ENCODE measurements at regions of chr7 and their contacts with region 1.

Region 1: GRCh38 chr7:15015545-15016326 is 113.2 kb upstream of the DGKB start:
- DNase-seq: peak in 4 of 5 donors; percentile 24 to 38 (median 32)
- ATAC-seq: peak; percentile 87 to 93 (median 89)
- H3K4me3 ChIP-seq: peak overlapping the region in 8 of 12 donors; percentile 7 to 49 (median 40)
- H3K27ac ChIP-seq: peak overlapping the region in 10 of 12 donors; percentile 13 to 75 (median 54)
- H3K4me1 ChIP-seq: peaks cover 0 to 18% (median 0%) of the 10 kb centered on the region in 12 donors
- H3K27me3 ChIP-seq: no peaks in the 10 kb centered on the region
- CTCF ChIP-seq: peak; percentile 55 to 81 (median 72)
- POLR2A ChIP-seq: no peak

Region 2: GRCh38 chr7:14734839-14735321 is 280.9 kb before region 1 on chr7:
- intact Hi-C with region 1: loop called in 1 of 10 experiments (anchors 5 kb)
- DNase-seq: no peak
- ATAC-seq: peak in 3 of 4 donors; percentile 13 to 39 (median 38)
- H3K4me3 ChIP-seq: no peak overlapping the region
- H3K27ac ChIP-seq: no peak overlapping the region
- H3K4me1 ChIP-seq: no peaks in the 10 kb centered on the region
- H3K27me3 ChIP-seq: no peaks in the 10 kb centered on the region
- CTCF ChIP-seq: peak in 11 of 12 donors; percentile 9 to 44 (median 25)
- POLR2A ChIP-seq: no peak

Region 3: GRCh38 chr7:14836571-14837189 is 179.1 kb before region 1 on chr7:
- intact Hi-C with region 1: loop called in 1 of 10 experiments (anchors 5 kb)
- DNase-seq: peak; percentile 48 to 70 (median 55)
- ATAC-seq: peak; percentile 83 to 94 (median 92)
- H3K4me3 ChIP-seq: no peak overlapping the region
- H3K27ac ChIP-seq: peak overlapping the region in 11 of 12 donors; percentile 45 to 85 (median 75)
- H3K4me1 ChIP-seq: peaks cover 0 to 32% (median 16%) of the 10 kb centered on the region in 12 donors
- H3K27me3 ChIP-seq: no peaks in the 10 kb centered on the region
- CTCF ChIP-seq: no peak
- POLR2A ChIP-seq: no peak

Region 4: GRCh38 chr7:15046851-15047250 is 31.1 kb after region 1 on chr7:
- intact Hi-C with region 1: no loop called
- DNase-seq: no peak
- ATAC-seq: no peak
- H3K4me3 ChIP-seq: no peak overlapping the region
- H3K27ac ChIP-seq: no peak overlapping the region
- H3K4me1 ChIP-seq: no peaks in the 10 kb centered on the region
- H3K27me3 ChIP-seq: no peaks in the 10 kb centered on the region
- CTCF ChIP-seq: no peak
- POLR2A ChIP-seq: no peak

Region 5: DNA sequence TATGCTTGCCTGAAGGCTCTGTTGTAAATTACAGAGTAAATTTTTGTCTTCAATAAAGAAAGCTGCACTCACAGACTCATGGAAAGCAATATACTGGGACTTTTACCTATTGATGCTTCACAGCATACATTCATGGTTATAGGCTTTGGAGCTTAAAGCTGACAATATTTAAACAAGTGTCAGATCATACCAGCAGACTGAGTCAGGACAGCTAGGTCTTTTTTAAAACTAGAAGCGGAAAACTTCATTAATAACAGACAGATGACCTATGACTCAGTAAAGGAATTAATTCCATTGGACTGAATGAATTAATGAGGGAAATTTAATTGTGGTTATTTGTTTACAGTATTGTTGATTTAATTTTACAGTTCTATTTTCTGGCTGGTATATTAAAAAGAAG is 52.6 kb after region 1 on chr7:
- intact Hi-C with region 1: no loop called
- DNase-seq: no peak
- ATAC-seq: no peak
- H3K4me3 ChIP-seq: no peak overlapping the region
- H3K27ac ChIP-seq: no peak overlapping the region
- H3K4me1 ChIP-seq: no peaks in the 10 kb centered on the region
- H3K27me3 ChIP-seq: no peaks in the 10 kb centered on the region
- CTCF ChIP-seq: no peak
- POLR2A ChIP-seq: no peak